ENCODE measurements at regions of chr2 and their contacts with region 1.

Region 1: GRCh38 chr2:207529330-207530159 is at the start of gene CREB1:
- DNase-seq: peak; percentile 98
- H3K4me3 Mint-ChIP-seq: peak within 1 kb of the TSS; percentile 94
- H3K27ac Mint-ChIP-seq: peak within 1 kb of the TSS; percentile 100
- H3K4me1 Mint-ChIP-seq: peaks cover 18% of the 10 kb centered on the region
- H3K27me3 Mint-ChIP-seq: no peaks in the 10 kb centered on the region
- CTCF ChIP-seq: no peak
- total RNA-seq, gene CREB1: 54.6 and 71.3 TPM in 2 replicates

Region 2: GRCh38 chr2:207487650-207488311 is 41.8 kb before region 1 on chr2:
- CTCF ChIA-PET with region 1: no interaction called
- POLR2A ChIA-PET with region 1: interaction called, 6 read pairs
- intact Hi-C with region 1: loop called (anchors 1 kb)
- DNase-seq: peak; percentile 75
- H3K4me3 Mint-ChIP-seq: peak overlapping the region; percentile 46
- H3K27ac Mint-ChIP-seq: peak overlapping the region; percentile 59
- H3K4me1 Mint-ChIP-seq: peaks cover 7% of the 10 kb centered on the region
- H3K27me3 Mint-ChIP-seq: no peaks in the 10 kb centered on the region
- CTCF ChIP-seq: peak; percentile 35

Region 3: GRCh38 chr2:207513551-207514257 is 15.8 kb before region 1 on chr2:
- CTCF ChIA-PET with region 1: interaction called, 4 read pairs
- POLR2A ChIA-PET with region 1: interaction called, 66 read pairs
- intact Hi-C with region 1: no loop called
- DNase-seq: peak; percentile 82
- H3K4me3 Mint-ChIP-seq: peak overlapping the region; percentile 55
- H3K27ac Mint-ChIP-seq: peak overlapping the region; percentile 91
- H3K4me1 Mint-ChIP-seq: peaks cover 36% of the 10 kb centered on the region
- H3K27me3 Mint-ChIP-seq: no peaks in the 10 kb centered on the region
- CTCF ChIP-seq: no peak

Region 4: GRCh38 chr2:207546822-207547221 is 17.3 kb after region 1 on chr2:
- CTCF ChIA-PET with region 1: interaction called, 7 read pairs
- POLR2A ChIA-PET with region 1: interaction called, 68 read pairs
- intact Hi-C with region 1: no loop called
- DNase-seq: peak; percentile 16
- H3K4me3 Mint-ChIP-seq: no peak overlapping the region
- H3K27ac Mint-ChIP-seq: no peak overlapping the region
- H3K4me1 Mint-ChIP-seq: peaks cover 16% of the 10 kb centered on the region
- H3K27me3 Mint-ChIP-seq: no peaks in the 10 kb centered on the region
- CTCF ChIP-seq: no peak

Region 5: GRCh38 chr2:207617011-207617691 is 87.6 kb after region 1 on chr2:
- CTCF ChIA-PET with region 1: interaction called, 3 read pairs
- POLR2A ChIA-PET with region 1: interaction called, 14 read pairs
- intact Hi-C with region 1: loop called (anchors 2 kb)
- DNase-seq: peak; percentile 58
- H3K4me3 Mint-ChIP-seq: peak overlapping the region; percentile 43
- H3K27ac Mint-ChIP-seq: peak overlapping the region; percentile 86
- H3K4me1 Mint-ChIP-seq: peaks cover 20% of the 10 kb centered on the region
- H3K27me3 Mint-ChIP-seq: no peaks in the 10 kb centered on the region
- CTCF ChIP-seq: no peak

Region 6: GRCh38 chr2:207632575-207633493 is 103.3 kb after region 1 on chr2:
- CTCF ChIA-PET with region 1: interaction called, 3 read pairs
- POLR2A ChIA-PET with region 1: interaction called, 17 read pairs
- intact Hi-C with region 1: no loop called
- DNase-seq: peak; percentile 92
- H3K4me3 Mint-ChIP-seq: peak overlapping the region; percentile 47
- H3K27ac Mint-ChIP-seq: peak overlapping the region; percentile 61
- H3K4me1 Mint-ChIP-seq: peaks cover 35% of the 10 kb centered on the region
- H3K27me3 Mint-ChIP-seq: no peaks in the 10 kb centered on the region
- CTCF ChIP-seq: no peak

Region 7: GRCh38 chr2:207725873-207726578 is 196.5 kb after region 1 on chr2:
- CTCF ChIA-PET with region 1: no interaction called
- POLR2A ChIA-PET with region 1: interaction called, 25 read pairs
- intact Hi-C with region 1: no loop called
- DNase-seq: peak; percentile 31
- H3K4me3 Mint-ChIP-seq: no peak overlapping the region
- H3K27ac Mint-ChIP-seq: peak overlapping the region; percentile 28
- H3K4me1 Mint-ChIP-seq: peaks cover 25% of the 10 kb centered on the region
- H3K27me3 Mint-ChIP-seq: no peaks in the 10 kb centered on the region
- CTCF ChIP-seq: no peak

Region 8: GRCh38 chr2:207746131-207746530 is 216.6 kb after region 1 on chr2:
- CTCF ChIA-PET with region 1: no interaction called
- POLR2A ChIA-PET with region 1: no interaction called
- intact Hi-C with region 1: no loop called
- DNase-seq: peak; percentile 74
- H3K4me3 Mint-ChIP-seq: no peak overlapping the region
- H3K27ac Mint-ChIP-seq: no peak overlapping the region
- H3K4me1 Mint-ChIP-seq: no peaks in the 10 kb centered on the region
- H3K27me3 Mint-ChIP-seq: no peaks in the 10 kb centered on the region
- CTCF ChIP-seq: peak; percentile 89